Posterior cingulate gyrus (tissue), 11 donors: ENCODE measurements at regions of chr2 and their contacts with region 1.

Region 1: DNA sequence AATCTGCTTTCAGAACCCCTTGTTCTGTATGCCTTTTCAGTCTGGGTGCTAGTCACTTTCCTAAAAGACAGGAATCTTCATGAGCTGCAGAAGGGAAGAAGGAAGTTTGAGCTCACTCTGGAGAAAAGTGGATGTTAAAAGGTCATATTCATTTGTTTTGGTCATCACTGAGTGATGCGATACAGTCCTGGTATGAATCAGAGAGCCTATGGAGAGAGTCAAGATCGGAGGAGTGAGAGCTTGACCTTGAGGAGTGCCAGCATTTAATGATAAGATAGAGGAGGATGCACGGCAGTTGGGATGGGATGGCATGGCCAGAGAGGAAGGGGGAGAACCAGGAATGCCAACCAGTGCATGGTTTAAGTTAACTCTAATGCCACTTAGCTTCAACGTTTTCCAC is 19.6 kb downstream of the USP39 start:
- DNase-seq: no peak

Region 2: GRCh38 chr2:85813982-85814801 is 178.6 kb after region 1 on chr2:
- intact Hi-C with region 1: loop called (anchors 2 kb)
- DNase-seq: peak; percentile 87 to 99 (median 96)

Region 3: DNA sequence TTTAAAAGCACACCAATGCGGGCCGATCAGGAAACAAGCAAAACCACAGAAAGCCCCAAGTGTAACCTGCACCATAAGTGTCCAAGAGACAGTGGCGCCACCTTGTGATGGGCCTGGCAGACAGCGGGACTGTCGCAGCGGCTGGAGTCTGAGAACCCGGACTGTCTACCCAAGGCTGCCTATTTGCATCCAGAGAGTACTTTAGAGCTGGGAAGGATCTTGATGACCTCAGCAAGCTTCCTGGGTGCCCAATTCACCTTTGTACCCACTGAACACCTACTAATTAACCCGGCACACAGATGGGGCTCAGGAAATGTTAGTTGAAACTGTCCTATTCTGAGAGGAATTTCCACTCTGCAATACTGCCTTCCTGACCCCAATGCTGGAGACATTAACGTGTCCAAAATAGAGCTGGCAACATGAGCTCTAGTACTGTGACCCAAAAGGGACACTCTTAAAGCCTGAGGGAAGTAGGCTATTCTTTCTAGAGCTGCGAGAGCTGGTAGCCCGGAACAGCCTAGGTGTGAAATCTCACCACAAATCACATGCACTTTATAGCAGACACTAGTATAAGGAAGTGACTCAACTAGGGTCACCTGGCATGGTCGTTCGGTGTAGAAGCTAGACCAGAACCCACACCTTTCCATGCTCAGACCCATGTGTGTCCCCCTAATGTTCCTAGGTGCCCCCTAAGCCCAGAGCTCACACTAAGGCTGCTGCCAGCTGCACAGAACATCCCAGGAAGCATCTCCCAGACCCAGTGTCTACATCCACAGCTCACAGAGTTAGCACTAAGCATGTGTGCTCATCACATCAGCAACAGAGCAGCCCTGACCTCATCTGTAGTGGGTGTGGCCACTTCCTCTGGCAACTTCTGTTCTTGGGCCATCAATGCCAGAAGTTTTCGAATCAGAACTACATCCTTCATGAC is 444.6 kb after region 1 on chr2:
- intact Hi-C with region 1: no loop called
- DNase-seq: peak; percentile 54 to 97 (median 84)

Region 4: GRCh38 chr2:86105252-86105968 is 469.8 kb after region 1 on chr2 and contains the start of gene POLR1A:
- intact Hi-C with region 1: loop called (anchors 10 kb)
- DNase-seq: peak; percentile 86 to 99 (median 90)